ENCODE measurements at regions of chr12 and their contacts with region 1.

Region 1: GRCh38 chr12:120686690-120687577 is at the start of gene MLEC:
- DNase-seq: peak; percentile 98 to 99 (median 99)
- ATAC-seq: peak; percentile 83
- H3K4me3 ChIP-seq: peak within 1 kb of the TSS; percentile 88 to 90
- H3K4me3 Mint-ChIP-seq: peak within 1 kb of the TSS; percentile 91
- H3K27ac ChIP-seq: peak within 1 kb of the TSS; percentile 80 to 95
- H3K27ac Mint-ChIP-seq: peak within 1 kb of the TSS; percentile 92
- H3K4me1 ChIP-seq: peaks cover 29% of the 10 kb centered on the region
- H3K4me1 Mint-ChIP-seq: peaks cover 39% of the 10 kb centered on the region
- H3K27me3 ChIP-seq: no peaks in the 10 kb centered on the region
- H3K27me3 Mint-ChIP-seq: no peaks in the 10 kb centered on the region
- CTCF ChIP-seq: no peak
- total RNA-seq, gene MLEC: 20.3 to 22.5 TPM

Region 2: DNA sequence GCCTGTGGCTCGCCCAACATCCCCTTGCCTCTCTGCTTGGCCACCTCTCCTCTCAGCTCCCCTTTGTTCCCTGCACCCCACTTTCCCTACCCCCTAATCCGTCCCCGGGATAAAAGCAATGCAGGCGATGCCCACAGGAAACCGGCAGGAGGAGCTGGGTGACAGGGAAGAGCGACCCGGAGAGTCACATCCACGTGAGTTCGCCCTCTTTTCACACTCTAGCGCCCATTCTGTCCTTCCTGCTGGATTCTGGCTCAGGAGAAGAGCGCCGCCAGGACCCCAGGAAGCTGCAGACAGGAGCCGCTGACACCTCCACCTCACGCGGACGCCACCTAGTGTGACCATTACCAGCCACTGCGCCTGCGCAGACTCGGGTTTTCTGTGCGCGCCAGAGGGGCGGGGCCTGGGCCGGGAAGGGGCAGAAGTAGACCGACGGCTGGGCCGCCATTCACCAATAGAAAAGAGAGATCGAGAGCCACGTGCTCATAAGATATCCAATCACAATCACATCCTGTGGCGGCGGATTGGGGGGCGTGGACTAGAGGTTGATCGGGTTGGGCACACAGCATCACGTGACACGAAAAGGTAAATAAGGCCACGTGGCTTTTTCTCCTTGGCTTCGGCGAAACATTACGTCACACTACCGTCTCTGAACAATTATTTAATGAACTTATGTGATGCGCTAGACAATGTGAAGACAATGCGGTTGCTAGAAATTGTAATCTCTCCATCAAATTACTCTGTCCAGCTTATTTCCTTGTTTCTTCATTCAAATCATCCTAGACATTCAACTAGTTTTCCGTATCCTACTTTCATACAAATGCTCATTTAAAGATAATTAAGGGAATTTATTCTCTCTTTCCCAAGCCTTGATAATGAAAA is 369.5 kb before region 1 on chr12:
- CTCF ChIA-PET with region 1: no interaction called
- POLR2A ChIA-PET with region 1: no interaction called
- intact Hi-C with region 1: loop called (anchors 2 to 5 kb)
- DNase-seq: peak; percentile 99 to 100 (median 100)
- ATAC-seq: peak; percentile 98
- H3K4me3 ChIP-seq: peak overlapping the region; percentile 61 to 65
- H3K4me3 Mint-ChIP-seq: peak overlapping the region; percentile 88
- H3K27ac ChIP-seq: peak overlapping the region; percentile 75 to 86
- H3K27ac Mint-ChIP-seq: peak overlapping the region; percentile 97
- H3K4me1 ChIP-seq: peaks cover 5% of the 10 kb centered on the region
- H3K4me1 Mint-ChIP-seq: peaks cover 13% of the 10 kb centered on the region
- H3K27me3 ChIP-seq: no peaks in the 10 kb centered on the region
- H3K27me3 Mint-ChIP-seq: no peaks in the 10 kb centered on the region
- CTCF ChIP-seq: peak; percentile 58

Region 3: DNA sequence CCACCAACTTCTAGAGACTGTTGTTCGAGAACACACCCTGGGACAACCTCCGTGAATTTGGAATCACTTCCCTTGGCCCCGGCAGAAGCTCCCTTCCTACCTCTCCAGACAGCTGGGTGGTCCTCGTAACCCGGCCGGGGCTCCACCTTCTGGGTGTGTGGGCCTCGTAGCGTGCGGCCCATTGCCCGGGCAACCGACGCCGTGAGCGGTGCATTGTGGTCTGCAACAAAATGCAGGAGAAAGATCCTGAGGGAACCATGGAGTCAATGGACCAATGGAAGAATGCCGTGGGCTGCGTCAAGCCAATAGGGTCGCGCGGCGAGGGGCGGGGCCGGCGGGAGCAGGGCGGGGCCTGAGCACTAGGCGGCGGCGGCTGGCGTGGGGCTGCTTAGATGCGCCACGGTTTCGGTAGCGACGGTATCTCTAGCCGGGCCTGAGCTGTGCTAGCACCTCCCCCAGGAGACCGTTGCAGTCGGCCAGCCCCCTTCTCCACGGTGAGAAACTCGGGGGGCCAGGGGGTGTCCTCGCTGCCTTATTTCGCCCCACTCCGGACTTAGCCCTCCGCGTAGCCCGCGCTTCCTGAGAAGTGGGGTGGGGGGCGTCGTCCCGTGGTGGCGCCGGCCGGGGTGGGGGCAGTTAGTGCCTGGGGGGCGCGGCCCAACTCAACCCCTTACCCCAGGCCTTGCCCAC is 191.1 kb before region 1 on chr12 and contains the start of gene DYNLL1:
- CTCF ChIA-PET with region 1: no interaction called
- POLR2A ChIA-PET with region 1: no interaction called
- intact Hi-C with region 1: loop called in 1 of 2 experiments (anchors 1 kb)
- DNase-seq: peak; percentile 95 to 98 (median 97)
- ATAC-seq: peak; percentile 97
- H3K4me3 ChIP-seq: peak within 1 kb of the TSS; percentile 80 to 96
- H3K4me3 Mint-ChIP-seq: peak within 1 kb of the TSS; percentile 94
- H3K27ac ChIP-seq: peak within 1 kb of the TSS; percentile 79 to 84
- H3K27ac Mint-ChIP-seq: peak within 1 kb of the TSS; percentile 90
- H3K4me1 ChIP-seq: peaks cover 17% of the 10 kb centered on the region
- H3K4me1 Mint-ChIP-seq: peaks cover 32% of the 10 kb centered on the region
- H3K27me3 ChIP-seq: no peaks in the 10 kb centered on the region
- H3K27me3 Mint-ChIP-seq: no peaks in the 10 kb centered on the region
- CTCF ChIP-seq: no peak
- total RNA-seq, gene DYNLL1: 25.9 to 26.1 TPM

Region 4: GRCh38 chr12:120649442-120650232 is 37.3 kb before region 1 on chr12:
- CTCF ChIA-PET with region 1: interaction called, 19 read pairs
- POLR2A ChIA-PET with region 1: interaction called, 5 read pairs
- intact Hi-C with region 1: loop called (anchors 1 kb)
- DNase-seq: no peak
- ATAC-seq: no peak
- H3K4me3 ChIP-seq: no peak overlapping the region
- H3K4me3 Mint-ChIP-seq: no peak overlapping the region
- H3K27ac ChIP-seq: no peak overlapping the region
- H3K27ac Mint-ChIP-seq: no peak overlapping the region
- H3K4me1 ChIP-seq: peaks cover 7% of the 10 kb centered on the region
- H3K4me1 Mint-ChIP-seq: peaks cover 9% of the 10 kb centered on the region
- H3K27me3 ChIP-seq: peaks cover 14 to 21% of the 10 kb centered on the region in 2 experiments
- H3K27me3 Mint-ChIP-seq: peaks cover 47% of the 10 kb centered on the region
- CTCF ChIP-seq: peak; percentile 23

Region 5: GRCh38 chr12:120748242-120748641 is 61.3 kb after region 1 on chr12:
- CTCF ChIA-PET with region 1: no interaction called
- POLR2A ChIA-PET with region 1: no interaction called
- intact Hi-C with region 1: no loop called
- DNase-seq: peak in 1 of 9 experiments; percentile 33
- ATAC-seq: no peak
- H3K4me3 ChIP-seq: no peak overlapping the region
- H3K4me3 Mint-ChIP-seq: no peak overlapping the region
- H3K27ac ChIP-seq: no peak overlapping the region
- H3K27ac Mint-ChIP-seq: no peak overlapping the region
- H3K4me1 ChIP-seq: no peaks in the 10 kb centered on the region
- H3K4me1 Mint-ChIP-seq: no peaks in the 10 kb centered on the region
- H3K27me3 ChIP-seq: no peaks in the 10 kb centered on the region
- H3K27me3 Mint-ChIP-seq: peaks cover 3% of the 10 kb centered on the region
- CTCF ChIP-seq: no peak

Region 6: GRCh38 chr12:120814203-120814902 is 127.4 kb after region 1 on chr12:
- CTCF ChIA-PET with region 1: no interaction called
- POLR2A ChIA-PET with region 1: no interaction called
- intact Hi-C with region 1: no loop called
- DNase-seq: no peak
- ATAC-seq: no peak
- H3K4me3 ChIP-seq: no peak overlapping the region
- H3K4me3 Mint-ChIP-seq: no peak overlapping the region
- H3K27ac ChIP-seq: no peak overlapping the region
- H3K27ac Mint-ChIP-seq: no peak overlapping the region
- H3K4me1 ChIP-seq: no peaks in the 10 kb centered on the region
- H3K4me1 Mint-ChIP-seq: peaks cover 43% of the 10 kb centered on the region
- H3K27me3 ChIP-seq: no peaks in the 10 kb centered on the region
- H3K27me3 Mint-ChIP-seq: no peaks in the 10 kb centered on the region
- CTCF ChIP-seq: no peak

Region 7: DNA sequence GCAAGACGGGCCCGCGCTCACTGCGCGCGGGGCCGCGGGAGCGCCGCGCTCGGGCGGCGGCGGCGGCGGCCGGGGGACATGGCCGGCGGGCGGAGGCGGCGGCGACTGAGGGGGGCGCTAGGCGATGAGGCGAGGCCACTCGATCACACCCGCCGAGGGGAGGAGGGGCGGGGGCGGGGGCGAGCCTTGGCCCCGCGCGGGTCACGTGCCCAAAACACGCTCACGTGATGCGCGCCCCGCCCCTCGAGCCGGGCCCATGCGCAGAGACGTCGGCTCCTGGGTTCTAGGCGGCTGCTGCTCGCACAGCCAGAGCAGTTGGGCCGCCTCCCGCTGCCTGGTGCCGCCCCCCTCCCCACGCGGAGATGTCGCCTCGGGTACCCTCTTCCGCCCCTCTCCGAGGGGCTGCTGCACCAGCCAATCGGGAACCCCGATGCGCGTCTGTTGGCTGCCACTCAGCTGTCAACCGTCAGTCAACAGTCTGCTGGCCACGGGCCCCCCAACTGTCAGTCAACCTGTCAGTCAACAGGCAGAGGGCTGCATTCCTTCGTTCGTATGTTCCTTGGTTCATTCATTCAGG is 217.4 kb after region 1 on chr12 and contains the start of gene SPPL3:
- CTCF ChIA-PET with region 1: no interaction called
- POLR2A ChIA-PET with region 1: no interaction called
- intact Hi-C with region 1: loop called in 1 of 2 experiments (anchors 1 kb)
- DNase-seq: peak; percentile 86 to 96 (median 93)
- ATAC-seq: peak; percentile 75
- H3K4me3 ChIP-seq: peak within 1 kb of the TSS; percentile 76 to 82
- H3K4me3 Mint-ChIP-seq: peak within 1 kb of the TSS; percentile 99
- H3K27ac ChIP-seq: peak within 1 kb of the TSS; percentile 66 to 84
- H3K27ac Mint-ChIP-seq: peak within 1 kb of the TSS; percentile 98
- H3K4me1 ChIP-seq: peaks cover 21% of the 10 kb centered on the region
- H3K4me1 Mint-ChIP-seq: peaks cover 32% of the 10 kb centered on the region
- H3K27me3 ChIP-seq: no peaks in the 10 kb centered on the region
- H3K27me3 Mint-ChIP-seq: no peaks in the 10 kb centered on the region
- CTCF ChIP-seq: no peak
- total RNA-seq, gene SPPL3: 42.3 to 42.9 TPM

Region 8: DNA sequence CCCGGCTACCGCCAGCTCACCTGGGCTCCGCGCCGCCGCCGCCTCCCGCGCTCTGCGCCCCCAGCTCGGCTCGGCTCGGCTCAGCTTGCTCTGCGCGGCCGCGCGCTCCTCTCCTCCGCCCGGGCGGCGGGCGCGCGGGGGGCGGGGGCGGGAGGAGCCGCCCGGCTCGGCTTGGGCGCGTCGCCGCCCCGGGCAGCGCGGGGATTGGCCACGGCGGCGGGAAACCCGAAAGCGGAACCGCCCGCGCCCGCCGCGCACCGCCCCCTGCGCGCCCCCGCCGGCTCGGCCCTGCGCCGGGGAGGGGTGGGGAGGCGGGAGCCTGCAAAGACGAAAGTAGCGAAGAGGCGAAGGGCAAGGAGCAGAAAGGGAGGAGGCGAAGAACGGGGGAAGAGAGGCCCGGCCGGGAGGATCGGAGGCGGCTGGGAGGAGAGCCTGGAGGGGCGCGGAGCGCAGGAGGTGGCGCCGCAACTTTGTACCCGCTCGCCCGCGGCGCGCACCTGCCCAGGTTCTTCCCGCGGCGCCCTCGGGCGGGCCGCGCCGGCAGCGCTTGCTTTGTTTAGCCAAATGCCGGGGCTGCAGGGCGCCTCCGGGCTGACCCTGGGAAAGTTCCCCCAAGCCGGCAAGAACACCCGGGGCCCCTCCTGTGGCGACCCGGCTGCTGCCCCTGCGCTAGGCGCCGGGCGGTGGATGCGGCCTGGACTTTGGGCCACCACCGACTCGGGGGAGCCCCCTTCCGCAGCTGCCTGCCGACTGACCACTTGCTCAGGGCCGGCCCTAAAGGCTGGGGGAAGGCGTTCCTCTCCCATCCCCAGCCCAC is 609.9 kb after region 1 on chr12 and contains the start of gene CAMKK2:
- CTCF ChIA-PET with region 1: no interaction called
- POLR2A ChIA-PET with region 1: no interaction called
- intact Hi-C with region 1: loop called in 1 of 2 experiments (anchors 5 kb)
- DNase-seq: peak; percentile 77 to 94 (median 85)
- ATAC-seq: peak; percentile 88
- H3K4me3 ChIP-seq: peak within 1 kb of the TSS; percentile 73 to 93
- H3K4me3 Mint-ChIP-seq: peak within 1 kb of the TSS; percentile 87
- H3K27ac ChIP-seq: peak within 1 kb of the TSS; percentile 31 to 59
- H3K27ac Mint-ChIP-seq: peak within 1 kb of the TSS; percentile 80
- H3K4me1 ChIP-seq: peaks cover 15% of the 10 kb centered on the region
- H3K4me1 Mint-ChIP-seq: peaks cover 20% of the 10 kb centered on the region
- H3K27me3 ChIP-seq: no peaks in the 10 kb centered on the region
- H3K27me3 Mint-ChIP-seq: no peaks in the 10 kb centered on the region
- CTCF ChIP-seq: no peak
- total RNA-seq, gene CAMKK2: 3.6 to 4.1 TPM

Measured in CD8-positive, alpha-beta T cell (primary cell).